Motor neuron (in vitro differentiated cells): ENCODE measurements at regions of chr5 and their contacts with region 1.

Region 1: DNA sequence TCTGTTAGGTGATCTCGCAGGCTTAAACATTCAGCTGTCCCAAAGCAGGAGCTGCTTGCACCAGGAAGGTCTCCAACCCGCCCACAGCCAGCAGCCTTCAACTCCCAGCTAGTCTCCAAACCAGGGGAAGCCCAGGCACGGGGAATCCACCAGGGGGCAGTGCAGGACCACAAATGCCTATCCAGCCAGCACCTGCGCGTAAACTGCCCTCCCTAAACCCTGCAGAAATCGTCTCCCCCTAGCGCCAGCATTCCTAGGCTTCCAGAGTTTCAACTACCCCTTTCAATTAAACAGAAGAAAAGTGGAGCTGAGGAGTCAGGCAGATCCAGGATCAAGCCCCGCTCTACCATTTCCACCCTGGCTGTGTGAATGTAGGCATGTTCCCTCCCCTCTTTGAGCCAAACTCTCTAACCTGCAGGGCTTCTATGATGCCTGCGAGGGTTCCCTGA is 72.0 kb downstream of the HRH2 start:
- ATAC-seq: peak; percentile 90 to 98 (median 96)
- H3K4me3 ChIP-seq: peak overlapping the region in 4 of 5 donors; percentile 0 to 6 (median 2)
- H3K27ac ChIP-seq: no peak overlapping the region
- H3K4me1 ChIP-seq: peaks cover 0 to 2% of the 10 kb centered on the region in 2 donors

Region 2: DNA sequence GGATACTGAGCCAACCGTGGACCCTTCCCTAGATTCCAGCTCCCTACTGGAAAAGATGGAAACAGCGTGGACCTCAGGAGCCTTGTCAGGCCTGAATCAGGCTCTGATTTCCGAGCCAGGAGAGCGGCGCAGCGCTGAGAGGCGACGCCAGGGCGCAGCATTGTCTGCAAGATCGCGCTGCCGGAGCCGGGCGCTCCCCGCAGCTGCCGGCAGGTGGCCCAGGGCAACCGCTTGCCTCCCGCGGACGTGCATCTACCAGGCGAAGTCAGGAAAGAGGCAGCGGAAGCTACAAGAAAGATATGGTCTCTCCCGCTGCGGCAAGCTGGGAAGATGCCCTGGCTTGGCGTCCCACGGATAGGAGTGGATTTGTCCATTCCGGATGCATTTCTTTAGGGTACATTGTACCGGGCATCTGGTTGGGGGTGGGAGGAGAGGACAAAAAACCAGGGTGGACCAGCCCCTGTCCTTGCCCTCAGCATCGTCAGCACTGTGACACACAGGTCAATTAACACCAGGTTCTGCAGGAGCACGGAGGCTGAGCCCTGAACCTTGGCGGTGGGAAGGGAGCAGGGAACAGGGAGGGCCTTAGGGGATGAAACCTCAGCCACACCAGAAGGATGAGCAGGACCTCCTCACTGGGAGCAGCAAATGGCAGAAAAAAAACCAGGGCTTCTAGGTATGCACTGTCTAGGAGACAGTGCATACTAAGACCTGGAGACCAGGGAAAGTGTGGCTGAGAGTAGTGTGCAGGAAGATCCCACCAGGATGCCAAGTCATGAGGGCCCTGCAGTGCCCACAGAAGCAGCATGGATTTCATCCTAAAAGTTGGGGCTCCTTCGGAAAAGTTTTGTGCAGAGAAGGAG is 195.6 kb before region 1 on chr5:
- in situ Hi-C with region 1: loop called in 1 of 9 experiments (anchors 25 kb)
- ATAC-seq: peak; percentile 92 to 99 (median 98)
- H3K4me3 ChIP-seq: peak overlapping the region in 4 of 5 donors; percentile 3 to 18 (median 12)
- H3K27ac ChIP-seq: no peak overlapping the region
- H3K4me1 ChIP-seq: no peaks in the 10 kb centered on the region

Region 3: GRCh38 chr5:175867587-175868347 is 137.9 kb after region 1 on chr5:
- in situ Hi-C with region 1: loop called in 2 of 9 experiments (anchors 25 kb)
- ATAC-seq: peak in 4 of 8 experiments; percentile 20 to 44 (median 35)
- H3K4me3 ChIP-seq: no peak overlapping the region
- H3K27ac ChIP-seq: no peak overlapping the region
- H3K4me1 ChIP-seq: peaks cover 12 to 48% of the 10 kb centered on the region in 2 donors

Region 4: DNA sequence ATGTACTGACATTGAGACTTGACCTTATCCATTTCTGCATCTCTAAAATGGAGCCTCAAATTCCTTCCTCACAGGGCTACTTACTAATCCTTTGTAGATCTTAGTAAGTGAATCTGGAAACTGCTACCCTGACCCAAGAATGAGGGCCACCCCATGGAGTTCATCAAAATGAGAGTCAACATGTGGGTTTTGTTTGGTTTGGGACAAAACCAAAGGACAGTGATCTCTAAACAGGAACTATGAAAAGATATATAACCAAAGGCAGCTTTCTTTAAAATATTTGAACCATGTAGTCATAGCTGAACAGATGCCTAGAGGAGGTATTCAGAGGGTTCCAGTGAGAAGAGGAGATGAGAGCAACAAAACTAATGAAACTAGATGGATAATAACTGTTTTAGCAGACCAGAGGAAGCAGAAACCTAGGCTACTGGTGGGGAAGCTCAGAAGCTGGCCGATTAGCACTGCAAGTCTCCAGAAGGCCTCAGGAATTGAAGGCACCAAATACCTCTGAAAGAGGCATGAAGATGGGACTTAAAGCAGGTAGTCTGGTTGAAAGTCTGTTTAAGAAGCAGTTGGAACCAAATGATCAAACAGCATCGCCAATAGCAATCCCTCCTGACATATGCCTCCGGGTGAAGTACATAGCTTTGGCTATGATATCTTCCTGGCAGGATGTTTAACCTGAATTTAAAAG is 192.5 kb after region 1 on chr5:
- in situ Hi-C with region 1: no loop called
- ATAC-seq: peak in 1 of 8 experiments; percentile 20
- H3K4me3 ChIP-seq: no peak overlapping the region
- H3K27ac ChIP-seq: no peak overlapping the region
- H3K4me1 ChIP-seq: no peaks in the 10 kb centered on the region

Region 5: DNA sequence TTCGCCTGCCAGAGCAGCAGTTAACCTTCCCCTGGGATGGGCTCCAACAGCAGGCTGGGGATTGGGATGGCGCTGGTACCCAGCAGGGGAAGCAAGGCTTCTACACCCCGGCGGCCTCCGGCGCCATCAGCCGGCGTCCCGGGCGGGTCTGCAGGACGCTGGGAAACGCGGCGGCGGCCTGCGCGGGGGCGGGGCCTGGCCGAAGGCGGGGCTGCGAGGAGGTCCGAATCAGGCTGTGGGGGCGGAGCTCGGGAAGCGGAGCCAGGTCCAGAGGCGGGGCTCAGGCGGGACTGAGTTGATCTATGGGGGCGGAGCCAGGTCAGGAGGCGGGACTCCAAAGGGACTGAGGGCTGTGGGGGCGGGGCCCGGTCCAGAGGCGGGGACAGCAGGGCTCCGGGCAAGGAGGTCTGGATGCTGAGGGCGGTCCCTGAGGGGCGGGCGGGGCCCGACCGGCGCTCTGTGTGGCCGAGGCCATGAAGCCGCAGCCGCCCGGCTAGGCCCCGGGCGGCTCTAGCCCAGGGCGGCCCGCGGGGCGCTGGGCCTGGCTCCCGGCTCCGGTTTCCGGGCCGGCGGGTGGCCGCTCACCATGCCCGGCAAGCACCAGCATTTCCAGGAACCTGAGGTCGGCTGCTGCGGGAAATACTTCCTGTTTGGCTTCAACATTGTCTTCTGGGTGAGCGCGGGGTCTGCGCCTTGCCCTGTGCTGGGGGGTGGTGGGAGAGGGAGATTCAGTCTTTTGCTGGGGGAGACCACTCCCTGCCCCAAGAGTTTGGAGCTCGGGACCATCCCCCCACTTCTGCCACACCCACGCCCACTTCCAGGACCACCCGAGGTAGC is 917.4 kb after region 1 on chr5 and contains the start of gene TSPAN17:
- in situ Hi-C with region 1: loop called in 1 of 9 experiments (anchors 25 kb)
- ATAC-seq: peak; percentile 84 to 94 (median 92)
- H3K4me3 ChIP-seq: peak within 1 kb of the TSS; percentile 43 to 59 (median 49)
- H3K27ac ChIP-seq: peak within 1 kb of the TSS; percentile 67 to 69
- H3K4me1 ChIP-seq: peaks cover 10 to 14% of the 10 kb centered on the region in 2 donors
- total RNA-seq, gene TSPAN17: 16.5 to 62.7 (median 25.1) TPM